ENCODE measurements at regions of chr1 and their contacts with region 1.

Region 1: GRCh38 chr1:236748471-236748870 is 46.6 kb upstream of the MTR start:
- DNase-seq: peak in 1 of 2 experiments; percentile 29
- ATAC-seq: peak; percentile 59 to 83; a peak in 4 of 6 replicates
- H3K4me3 ChIP-seq: no peak overlapping the region
- H3K27ac ChIP-seq: no peak overlapping the region
- H3K4me1 ChIP-seq: no peaks in the 10 kb centered on the region
- CTCF ChIP-seq: no peak
- EP300 ChIP-seq: no peak
- POLR2A ChIP-seq: no peak
- RAD21 ChIP-seq: no peak

Region 2: DNA sequence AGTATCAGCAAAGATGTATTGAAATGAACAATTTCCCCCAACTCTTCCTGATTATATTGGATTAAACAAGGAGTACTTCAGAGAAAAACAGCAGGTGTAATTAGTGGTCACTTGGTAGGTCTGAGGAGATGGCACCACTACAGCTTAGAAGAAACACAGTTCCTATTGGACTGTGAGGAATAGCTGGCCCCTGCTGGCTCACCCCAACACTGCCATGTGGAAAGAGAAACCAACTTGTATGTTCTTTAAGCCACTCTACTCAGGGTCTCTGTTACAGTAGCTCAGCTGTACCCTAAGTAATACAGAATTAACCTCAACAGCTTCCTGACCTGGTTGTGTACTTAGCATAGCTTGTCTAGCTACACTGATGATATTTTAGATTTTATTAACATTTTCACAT is 20.1 kb after region 1 on chr1:
- CTCF ChIA-PET with region 1: interaction called, 13 read pairs
- POLR2A ChIA-PET with region 1: no interaction called
- DNase-seq: no peak
- ATAC-seq: peak; percentile 30 to 64; a peak in 3 of 6 replicates
- H3K4me3 ChIP-seq: no peak overlapping the region
- H3K27ac ChIP-seq: no peak overlapping the region
- H3K4me1 ChIP-seq: no peaks in the 10 kb centered on the region
- CTCF ChIP-seq: no peak
- EP300 ChIP-seq: no peak
- POLR2A ChIP-seq: no peak
- RAD21 ChIP-seq: no peak

Region 3: DNA sequence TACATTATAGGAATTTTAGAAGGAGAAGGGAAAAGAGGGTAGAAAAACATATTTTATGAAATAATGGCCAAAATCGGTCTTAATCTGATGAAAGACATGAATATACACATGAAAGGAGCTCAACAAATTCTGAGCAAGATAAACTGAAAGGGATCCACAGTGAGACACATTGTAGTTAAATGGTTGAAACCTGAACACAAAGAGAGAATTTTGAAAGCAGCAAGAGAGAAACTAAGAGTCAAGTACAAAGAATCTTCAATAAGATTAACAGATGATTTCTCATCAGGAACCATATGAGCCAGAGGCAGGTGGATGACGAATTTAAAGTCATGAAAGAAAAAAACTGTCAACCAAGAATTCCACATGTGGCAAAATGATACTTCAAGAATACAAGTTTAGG is 30.8 kb after region 1 on chr1:
- CTCF ChIA-PET with region 1: no interaction called
- POLR2A ChIA-PET with region 1: no interaction called
- DNase-seq: no peak
- ATAC-seq: no peak
- H3K4me3 ChIP-seq: no peak overlapping the region
- H3K27ac ChIP-seq: no peak overlapping the region
- H3K4me1 ChIP-seq: no peaks in the 10 kb centered on the region
- CTCF ChIP-seq: no peak
- EP300 ChIP-seq: no peak
- POLR2A ChIP-seq: no peak
- RAD21 ChIP-seq: no peak

Region 4: GRCh38 chr1:236888126-236888525 is 139.7 kb after region 1 on chr1:
- CTCF ChIA-PET with region 1: no interaction called
- POLR2A ChIA-PET with region 1: no interaction called
- DNase-seq: no peak
- ATAC-seq: no peak
- H3K4me3 ChIP-seq: no peak overlapping the region
- H3K27ac ChIP-seq: no peak overlapping the region
- H3K4me1 ChIP-seq: no peaks in the 10 kb centered on the region; the same call in 2 of the 3 replicates
- CTCF ChIP-seq: no peak
- EP300 ChIP-seq: no peak
- POLR2A ChIP-seq: no peak
- RAD21 ChIP-seq: no peak

Measured in A549 (cell line).